Cardiac septum (tissue), 1 donor: ENCODE measurements at regions of chr20 and their contacts with region 1.

Region 1: DNA sequence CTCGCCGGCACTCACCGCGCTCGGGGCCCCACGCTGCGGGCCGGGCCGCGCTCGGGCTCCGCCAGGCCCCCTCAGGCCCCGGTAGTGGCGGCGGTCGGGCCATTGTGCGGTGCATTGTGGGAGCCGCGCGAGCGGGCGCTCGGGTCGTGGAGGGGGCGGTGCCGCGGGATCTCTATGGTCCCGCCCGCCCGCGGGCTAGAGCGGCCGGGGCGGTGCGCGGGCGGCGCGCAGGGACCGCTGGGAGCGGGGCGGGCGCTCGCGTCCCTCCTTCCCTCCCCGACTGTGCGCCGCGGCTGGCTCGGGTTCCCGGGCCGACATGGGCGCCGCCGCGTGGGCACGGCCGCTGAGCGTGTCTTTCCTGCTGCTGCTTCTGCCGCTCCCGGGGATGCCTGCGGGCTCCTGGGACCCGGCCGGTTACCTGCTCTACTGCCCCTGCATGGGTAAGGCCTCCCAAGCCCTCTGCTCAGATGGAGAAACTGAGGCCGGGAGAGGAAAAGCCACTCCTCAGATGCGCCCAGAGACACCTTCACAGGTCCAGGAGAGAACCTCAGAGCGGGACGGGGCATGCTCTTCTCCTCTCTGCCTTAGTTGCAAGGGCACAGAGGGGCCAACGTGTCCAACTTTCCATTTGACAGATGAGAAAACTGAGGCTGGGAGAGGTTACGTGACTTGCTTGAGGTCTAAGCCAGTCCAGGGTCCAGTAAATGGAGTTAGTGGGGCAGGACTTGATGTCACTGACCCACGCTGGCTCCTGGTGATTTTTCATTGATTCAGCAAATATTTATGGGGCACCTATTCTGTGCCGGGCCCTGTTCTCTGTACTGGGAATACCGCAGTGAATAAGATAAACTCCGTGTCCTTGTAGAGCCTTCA is at the starts of genes PLAGL2 and POFUT1:
- DNase-seq: peak; percentile 96
- total RNA-seq, gene PLAGL2: 8.5 TPM
- total RNA-seq, gene POFUT1: 22.6 TPM

Region 2: GRCh38 chr20:32109392-32110172 is 98.3 kb before region 1 on chr20 and contains the start of gene TM9SF4:
- intact Hi-C with region 1: loop called (anchors 2 kb)
- DNase-seq: peak; percentile 93
- total RNA-seq, gene TM9SF4: 31.6 TPM

Region 3: GRCh38 chr20:32277361-32278198 is 69.7 kb after region 1 on chr20 and contains the start of gene KIF3B:
- intact Hi-C with region 1: loop called (anchors 5 kb)
- DNase-seq: peak; percentile 93
- total RNA-seq, gene KIF3B: 17.3 TPM

Region 4: GRCh38 chr20:32474967-32475811 is 267.3 kb after region 1 on chr20:
- intact Hi-C with region 1: loop called (anchors 5 kb)
- DNase-seq: peak; percentile 94